Left ventricle myocardium superior (tissue), 1 donor: ENCODE measurements at regions of chr17 and their contacts with region 1.

Region 1: DNA sequence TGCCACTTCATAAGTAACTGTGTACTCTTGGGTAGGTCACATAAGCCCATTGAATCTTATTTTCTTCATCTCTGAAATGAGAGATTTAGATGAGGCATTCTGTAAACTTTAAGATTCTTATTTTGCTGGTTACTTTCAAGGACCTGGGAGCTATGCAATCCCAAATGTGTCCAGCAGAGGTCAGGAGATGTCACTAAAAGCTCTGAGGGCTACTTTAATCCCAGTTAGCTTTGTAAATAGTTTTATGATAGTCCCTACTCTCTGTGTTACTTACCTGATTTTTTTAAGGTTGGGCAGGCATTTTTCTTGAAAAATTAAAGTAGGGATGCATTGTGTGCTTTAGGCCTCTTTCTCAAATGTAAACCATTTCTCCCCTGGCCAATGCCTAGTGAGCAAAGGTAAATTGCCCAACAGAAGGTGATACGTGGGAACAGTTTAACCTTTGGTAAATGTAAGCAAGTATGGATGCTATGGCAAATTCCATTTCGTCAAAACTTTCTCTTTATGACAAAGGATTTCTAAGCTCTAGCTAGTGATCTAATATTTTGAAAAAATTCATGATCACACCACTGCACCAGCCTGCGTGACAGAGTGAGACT is 57.1 kb upstream of the WSB1 start:
- DNase-seq: peak; percentile 59
- ATAC-seq: peak; percentile 77

Region 2: DNA sequence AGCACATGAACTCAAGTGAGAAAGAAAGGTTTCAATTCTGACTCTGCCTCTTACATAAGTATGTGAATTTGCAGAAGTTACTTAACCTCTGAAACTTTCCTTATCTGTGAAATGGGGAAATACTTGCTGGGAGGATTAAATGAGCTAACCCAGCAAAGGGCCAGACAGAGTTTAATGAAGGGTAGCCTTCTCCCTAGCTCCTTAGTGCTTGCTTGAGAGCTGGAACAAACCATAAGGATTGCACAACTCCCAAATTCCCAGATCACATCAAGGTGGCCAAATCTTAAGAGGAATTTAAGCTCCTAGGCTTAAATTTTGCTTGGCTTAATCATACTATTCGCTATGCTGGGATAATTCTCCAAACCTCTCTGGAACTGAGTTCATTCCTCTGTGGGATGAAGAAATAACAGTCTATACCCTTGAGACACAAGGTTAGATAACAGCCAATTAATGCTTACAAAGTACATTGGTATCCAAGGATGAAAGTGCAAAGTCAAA is 45.3 kb after region 1 on chr17:
- intact Hi-C with region 1: no loop called
- DNase-seq: no peak
- ATAC-seq: peak; percentile 95

Region 3: GRCh38 chr17:27293898-27294688 is 57.3 kb after region 1 on chr17 and contains the start of gene WSB1:
- intact Hi-C with region 1: no loop called
- DNase-seq: peak; percentile 97
- ATAC-seq: peak; percentile 98
- total RNA-seq, gene WSB1: 47.9 TPM

Region 4: GRCh38 chr17:27601069-27601975 is 364.5 kb after region 1 on chr17:
- intact Hi-C with region 1: loop called (anchors 5 kb)
- DNase-seq: peak; percentile 83
- ATAC-seq: peak; percentile 58